GM12878 (cell line): ENCODE measurements at regions of chr11 and their contacts with region 1.

Region 1: DNA sequence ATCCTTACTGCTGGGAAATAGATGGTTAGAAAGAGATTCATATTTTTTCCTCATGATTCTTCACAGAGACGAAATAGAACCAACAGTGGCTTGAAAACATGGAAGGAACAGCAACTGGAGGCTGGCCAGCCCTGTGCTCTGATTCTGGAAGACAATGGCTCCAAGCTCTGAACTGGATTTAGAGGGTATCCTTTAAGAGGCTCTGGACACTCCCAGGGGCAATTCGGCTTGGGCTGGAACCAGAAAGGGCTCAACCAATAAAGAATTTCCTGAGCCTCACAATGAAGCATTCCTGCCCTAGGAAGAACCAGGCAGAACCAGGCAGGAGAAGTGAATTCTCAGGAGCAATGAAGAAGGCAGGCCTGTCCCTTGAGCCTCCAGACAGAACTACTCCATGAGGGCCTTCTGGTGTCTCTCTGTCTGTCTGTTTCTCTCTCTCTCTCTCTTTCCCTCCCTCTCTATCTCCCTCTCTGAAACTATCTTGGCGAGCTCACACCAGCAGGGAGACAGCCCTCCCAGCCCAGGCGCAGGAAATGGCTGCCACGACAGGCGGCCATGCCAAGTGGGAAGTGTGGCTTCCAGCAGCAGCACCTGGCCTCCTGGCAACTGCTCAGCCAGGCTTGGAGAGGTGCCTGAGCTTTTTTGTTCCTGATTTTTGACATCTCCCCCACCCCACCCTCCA is 93.3 kb downstream of the RCN1 start:
- DNase-seq: no peak
- ATAC-seq: peak; percentile 26; the same call in 2 of the 3 replicates
- H3K4me3 ChIP-seq: no peak overlapping the region
- H3K27ac ChIP-seq: peak overlapping the region; percentile 55
- H3K4me1 ChIP-seq: peaks cover 23% of the 10 kb centered on the region
- H3K27me3 ChIP-seq: no peaks in the 10 kb centered on the region
- CTCF ChIP-seq: no peak
- EP300 ChIP-seq: no peak
- POLR2A ChIP-seq: no peak
- RAD21 ChIP-seq: no peak

Region 2: DNA sequence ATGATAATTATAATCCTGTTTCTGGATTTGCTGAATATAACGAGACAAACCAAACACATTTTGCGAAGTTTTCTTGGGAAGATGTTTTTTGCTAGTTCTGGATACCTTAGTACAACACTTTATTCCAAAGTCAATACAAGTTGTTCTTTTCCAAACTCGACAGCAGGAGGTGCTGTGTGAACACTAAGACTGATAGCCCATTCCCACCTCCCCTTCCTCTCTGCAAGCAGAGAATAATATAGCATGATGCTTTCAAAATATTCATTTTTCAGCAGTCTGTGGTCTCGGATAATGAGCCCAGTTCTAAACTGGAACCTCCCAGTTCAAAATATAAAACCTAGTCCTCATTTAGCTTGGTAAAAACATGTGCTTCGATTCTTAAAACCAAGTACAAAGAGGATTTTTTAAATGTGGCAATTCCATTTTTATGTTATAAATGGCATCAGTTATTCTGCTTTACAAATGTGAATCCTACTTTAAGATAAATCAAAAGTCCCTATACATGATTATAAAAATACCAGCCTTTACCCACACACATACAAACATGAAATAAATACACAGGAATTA is 943.8 kb before region 1 on chr11:
- CTCF ChIA-PET with region 1: no interaction called
- POLR2A ChIA-PET with region 1: no interaction called
- RAD21 ChIA-PET with region 1: no interaction called
- SMC1A ChIA-PET with region 1: interaction called, 3 read pairs
- in situ Hi-C with region 1: loop called (anchors 10 kb)
- intact Hi-C with region 1: loop called (anchors 5 kb)
- DNase-seq: no peak
- ATAC-seq: peak; percentile 68
- H3K4me3 ChIP-seq: no peak overlapping the region
- H3K27ac ChIP-seq: no peak overlapping the region
- H3K4me1 ChIP-seq: no peaks in the 10 kb centered on the region
- H3K27me3 ChIP-seq: no peaks in the 10 kb centered on the region
- CTCF ChIP-seq: peak; percentile 50 to 54 (median 54)
- EP300 ChIP-seq: no peak
- POLR2A ChIP-seq: no peak
- RAD21 ChIP-seq: peak; percentile 61